HAP-1 (cell line): ENCODE measurements at regions of chr4 and their contacts with region 1.

Region 1: DNA sequence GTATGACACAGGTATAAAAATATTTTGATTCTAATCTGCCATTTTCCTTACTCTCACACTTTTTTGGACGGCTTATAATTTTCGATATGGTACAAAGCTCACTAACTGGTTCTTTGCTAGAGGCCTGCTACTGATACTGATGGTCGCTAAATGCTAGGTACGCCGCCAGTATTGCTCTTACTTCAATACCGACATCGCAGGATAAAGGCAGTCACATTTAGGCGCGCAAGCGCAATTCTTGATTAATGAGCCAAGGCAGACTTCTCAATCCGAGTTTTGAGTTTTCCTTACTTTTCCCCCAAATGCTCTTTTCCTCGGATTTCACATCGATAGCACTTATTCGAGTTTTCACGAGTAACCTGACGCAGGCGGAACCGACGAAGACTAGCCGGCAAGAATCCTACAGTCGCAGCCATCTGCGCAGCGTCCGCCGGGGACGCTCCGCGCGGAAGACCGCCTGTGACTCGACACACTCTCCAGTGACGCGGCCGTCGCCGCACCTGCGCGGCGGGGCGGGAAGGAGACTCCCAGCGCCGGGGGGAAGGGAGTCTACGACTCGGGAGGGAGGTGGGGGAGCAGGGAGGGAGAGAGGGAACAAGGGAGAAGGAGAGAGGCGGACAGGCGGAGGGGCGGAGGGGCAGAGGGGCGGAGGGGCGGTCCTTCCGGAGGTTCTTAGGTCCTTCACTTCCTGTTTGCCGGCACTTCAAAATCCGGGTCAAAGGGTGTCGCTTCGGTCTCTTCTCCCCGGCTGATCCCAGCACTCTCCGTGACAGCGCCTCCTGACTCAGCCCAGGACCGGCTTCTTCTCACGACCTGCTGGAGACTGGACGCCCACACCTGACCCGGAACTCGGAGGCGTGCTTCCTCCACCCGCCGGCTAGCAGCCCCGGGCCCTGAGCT is at the start of gene USP38:
- DNase-seq: peak; percentile 93 to 95
- H3K4me3 ChIP-seq: peak within 1 kb of the TSS; percentile 73
- H3K4me1 ChIP-seq: peaks cover 31% of the 10 kb centered on the region
- H3K27me3 ChIP-seq: no peaks in the 10 kb centered on the region

Region 2: GRCh38 chr4:142801966-142802365 is 382.5 kb before region 1 on chr4:
- in situ Hi-C with region 1: no loop called
- DNase-seq: no peak
- H3K4me3 ChIP-seq: no peak overlapping the region
- H3K4me1 ChIP-seq: no peaks in the 10 kb centered on the region
- H3K27me3 ChIP-seq: peaks cover 3% of the 10 kb centered on the region; the same call in 1 of the 2 replicates

Region 3: DNA sequence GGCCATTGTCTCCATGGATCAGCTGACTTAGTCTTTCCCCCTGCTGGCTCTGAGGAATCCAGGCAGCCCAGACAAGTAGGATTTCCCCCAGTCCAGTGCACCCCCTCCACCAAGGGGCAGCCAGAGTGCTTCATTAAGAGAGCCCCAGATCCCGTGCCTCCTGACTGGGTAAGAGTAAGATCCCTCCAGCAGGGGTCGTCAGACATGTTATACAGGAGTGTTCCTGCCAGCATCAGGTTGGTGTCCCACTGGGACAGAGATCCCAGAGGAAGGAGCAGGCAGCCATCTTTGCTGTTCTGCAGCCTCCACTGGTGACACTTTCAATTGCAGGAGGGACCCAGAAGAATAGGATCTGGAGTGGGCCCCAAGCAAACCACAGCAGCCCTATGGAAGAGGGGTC is 309.4 kb before region 1 on chr4:
- in situ Hi-C with region 1: no loop called
- DNase-seq: peak in 1 of 2 experiments; percentile 42
- H3K4me3 ChIP-seq: no peak overlapping the region
- H3K4me1 ChIP-seq: no peaks in the 10 kb centered on the region
- H3K27me3 ChIP-seq: no peaks in the 10 kb centered on the region

Region 4: DNA sequence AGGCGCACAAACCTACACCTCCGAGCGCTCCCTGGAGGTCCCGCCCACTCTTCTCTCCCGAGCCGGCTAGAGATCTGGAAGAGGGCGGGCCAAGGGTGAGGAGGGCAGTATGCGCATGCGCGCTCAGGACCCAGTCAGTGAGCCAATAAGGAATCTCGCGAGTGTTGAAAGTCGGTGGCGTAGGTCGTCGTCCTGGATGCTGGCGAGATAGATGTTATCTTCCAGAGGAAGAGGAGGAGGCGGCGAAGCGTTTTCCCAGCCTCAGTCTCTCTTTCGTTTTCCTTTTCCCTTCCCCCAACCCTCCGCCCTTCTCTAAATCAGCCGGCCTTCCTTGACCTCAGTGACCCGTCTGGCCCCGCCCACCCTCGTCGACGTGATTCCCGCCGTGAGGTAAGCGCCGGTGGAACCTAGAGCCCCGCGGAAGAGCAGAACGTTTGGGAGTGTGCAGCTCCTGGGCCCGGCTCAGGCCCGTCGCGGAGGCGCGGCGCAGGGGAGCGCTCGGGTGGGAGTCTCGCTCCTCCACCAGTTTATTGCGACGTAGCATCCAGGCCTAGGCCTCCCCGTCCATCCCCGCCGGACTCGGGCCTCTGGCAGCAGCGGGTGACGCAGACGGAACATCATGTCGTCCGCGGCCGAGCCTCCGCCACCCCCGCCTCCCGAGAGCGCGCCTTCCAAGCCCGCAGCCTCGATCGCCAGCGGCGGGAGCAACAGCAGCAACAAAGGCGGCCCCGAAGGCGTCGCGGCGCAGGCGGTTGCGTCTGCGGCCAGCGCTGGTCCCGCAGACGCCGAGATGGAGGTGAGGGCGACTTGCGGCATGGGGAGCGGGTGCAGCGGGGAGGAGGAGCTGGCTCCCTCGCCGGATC is 329.1 kb after region 1 on chr4 and contains the start of gene SMARCA5:
- in situ Hi-C with region 1: loop called (anchors 25 kb)
- DNase-seq: peak; percentile 97 to 99
- H3K4me3 ChIP-seq: peak within 1 kb of the TSS; percentile 85
- H3K4me1 ChIP-seq: peaks cover 28% of the 10 kb centered on the region
- H3K27me3 ChIP-seq: no peaks in the 10 kb centered on the region